Cardiac septum (tissue), 1 donor: ENCODE measurements at regions of chr1 and their contacts with region 1.

Region 1: GRCh38 chr1:232630047-232630893 is at the start of gene SIPA1L2:
- DNase-seq: peak; percentile 97
- total RNA-seq, gene SIPA1L2: 98.7 TPM

Region 2: DNA sequence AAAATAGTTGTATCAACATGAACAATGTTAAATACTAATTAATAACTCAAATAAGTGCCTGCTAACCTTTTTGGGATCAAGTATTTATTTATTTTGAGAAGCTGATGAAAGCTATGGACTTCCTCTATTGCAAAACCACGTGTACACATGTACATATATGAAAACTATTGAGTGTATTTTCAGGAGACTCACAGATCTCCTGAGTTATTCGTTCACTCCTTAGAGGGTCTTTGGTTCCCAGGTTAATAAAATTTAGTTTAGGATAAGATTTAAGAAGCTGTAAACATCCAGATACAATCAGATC is 873.2 kb before region 1 on chr1:
- intact Hi-C with region 1: loop called (anchors 10 kb)
- DNase-seq: no peak

Region 3: DNA sequence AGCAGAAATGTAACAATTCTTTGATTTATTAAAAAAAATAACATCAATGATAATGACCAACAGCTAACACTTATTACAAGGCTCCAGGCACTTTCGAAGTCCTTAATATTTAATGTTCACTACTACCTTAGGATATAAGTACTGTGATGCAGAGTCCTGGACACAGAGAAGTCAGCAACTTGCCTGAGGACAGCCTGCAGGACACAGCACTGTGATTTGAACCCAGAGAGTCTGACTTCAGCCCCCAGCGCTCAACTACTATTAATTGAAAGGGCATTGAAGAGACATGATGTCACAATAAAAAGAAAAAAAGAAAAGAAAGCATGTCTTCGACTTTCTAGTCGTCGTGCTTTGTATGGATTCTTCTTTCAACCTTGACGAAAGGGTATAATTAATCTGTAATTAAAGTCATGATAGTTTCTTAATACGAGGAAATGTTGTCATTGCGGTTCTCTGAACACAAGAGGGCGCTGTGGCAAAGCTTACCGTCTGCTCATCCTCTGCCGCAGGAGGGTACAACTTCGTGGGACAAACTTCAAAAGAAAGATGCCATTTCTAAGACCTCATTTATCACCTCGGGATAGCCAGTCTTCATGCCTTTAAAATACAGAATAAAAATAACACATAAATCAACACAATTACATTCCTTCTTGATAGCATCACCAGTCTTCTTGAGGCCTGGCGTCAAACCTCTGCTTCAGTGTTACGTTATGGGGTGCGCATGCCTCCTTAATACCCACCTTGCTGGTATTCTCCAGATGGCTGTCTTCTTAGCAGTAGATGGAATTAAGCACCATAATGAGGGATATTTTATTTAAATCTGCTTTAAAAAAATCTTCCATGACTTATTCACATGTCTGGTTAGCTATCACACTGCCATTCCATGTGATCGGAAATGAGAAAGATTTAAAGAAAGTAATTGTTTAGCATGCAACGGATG is 763.6 kb before region 1 on chr1:
- intact Hi-C with region 1: loop called (anchors 5 kb)
- DNase-seq: no peak

Region 4: DNA sequence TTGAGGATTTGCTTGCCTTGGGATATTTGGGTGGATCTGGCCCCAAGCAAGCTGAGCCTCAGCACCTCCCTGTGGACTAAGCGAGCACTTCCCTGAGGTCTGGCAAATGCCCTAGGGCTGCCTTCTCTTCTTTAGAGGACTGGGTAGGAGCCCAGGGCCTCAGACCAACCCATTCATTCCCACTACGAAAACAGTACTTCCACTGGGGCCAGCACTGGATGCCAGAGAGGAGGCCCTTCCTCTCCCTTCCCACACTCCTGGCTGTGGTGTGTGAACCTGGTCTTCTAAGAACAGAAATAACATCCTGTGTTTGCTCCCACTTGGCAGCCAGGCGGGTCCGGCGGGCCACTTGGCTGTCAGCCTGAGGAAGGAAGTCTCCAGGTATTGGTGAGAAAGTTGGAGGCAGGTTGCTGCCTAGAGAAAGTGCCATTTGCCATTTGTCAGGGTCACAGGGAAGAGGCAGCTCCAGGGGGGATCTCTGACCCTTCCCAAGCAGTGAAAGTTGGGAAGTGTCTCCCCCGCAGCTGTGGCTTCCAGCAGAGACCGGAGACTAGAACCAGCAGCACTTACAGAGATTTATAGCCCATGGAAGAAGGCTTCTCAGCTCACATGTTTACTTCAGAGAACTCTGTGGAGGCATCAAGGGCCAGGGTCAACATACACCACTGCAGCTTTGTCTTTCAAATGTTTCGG is 323.9 kb before region 1 on chr1:
- intact Hi-C with region 1: loop called (anchors 5 kb)
- DNase-seq: peak; percentile 84

Region 5: GRCh38 chr1:232486454-232487207 is 143.6 kb before region 1 on chr1:
- intact Hi-C with region 1: loop called (anchors 5 kb)
- DNase-seq: no peak

Region 6: GRCh38 chr1:232542638-232543593 is 87.4 kb before region 1 on chr1:
- intact Hi-C with region 1: no loop called
- DNase-seq: no peak

Region 7: GRCh38 chr1:232950197-232951176 is 320.2 kb after region 1 on chr1 and contains the start of gene NTPCR:
- intact Hi-C with region 1: loop called (anchors 5 kb)
- DNase-seq: peak; percentile 97
- total RNA-seq, gene NTPCR: 47.1 TPM